CD4-positive, alpha-beta T cell (primary cell): ENCODE measurements at regions of chr19 and their contacts with region 1.

Region 1: DNA sequence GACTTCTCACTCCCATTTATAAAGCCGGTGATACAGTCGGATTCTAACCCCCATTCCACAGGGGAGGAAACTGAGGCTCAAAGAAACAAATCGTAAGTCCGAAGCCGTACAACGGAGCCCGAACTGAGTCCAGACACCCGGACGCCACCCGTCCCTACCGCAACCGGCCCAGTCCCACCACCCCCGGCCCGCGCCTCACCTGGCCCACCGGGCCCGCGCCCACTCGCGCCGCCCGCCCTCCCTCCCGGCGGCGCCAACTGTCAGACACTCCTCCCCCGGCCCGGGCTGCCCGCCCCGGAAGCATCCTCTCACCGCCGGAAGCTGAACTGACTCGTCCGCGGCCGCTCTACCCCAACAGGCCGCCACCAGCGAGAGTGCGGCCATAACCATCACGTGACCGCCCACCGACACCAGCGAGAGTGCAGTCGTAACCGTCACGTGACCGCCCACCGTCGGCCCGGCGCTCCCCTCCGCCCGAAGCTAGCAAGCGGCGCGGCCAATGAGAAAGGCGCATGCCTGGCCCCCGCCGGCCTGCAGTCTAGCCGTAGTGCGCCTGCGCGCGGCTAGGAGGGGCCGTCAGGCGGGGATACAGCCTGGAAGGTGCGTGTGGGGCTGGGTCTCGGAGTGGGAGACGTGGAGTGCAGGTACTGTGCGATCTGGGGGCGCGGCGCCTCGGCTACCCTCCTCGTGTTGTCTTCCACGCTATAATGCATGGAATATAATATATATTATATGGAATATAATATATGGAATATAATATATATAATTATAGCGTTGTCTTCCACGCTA is at the starts of genes C19orf47 and PLD3:
- DNase-seq: peak; percentile 93 to 100 (median 98)
- ATAC-seq: peak; percentile 90
- H3K4me3 ChIP-seq: peak within 1 kb of the TSS; percentile 68
- H3K4me3 Mint-ChIP-seq: peak within 1 kb of the TSS; percentile 96
- H3K27ac ChIP-seq: peak within 1 kb of the TSS; percentile 51 to 67
- H3K27ac Mint-ChIP-seq: peak within 1 kb of the TSS; percentile 89
- H3K4me1 ChIP-seq: peaks cover 25% of the 10 kb centered on the region
- H3K4me1 Mint-ChIP-seq: peaks cover 46% of the 10 kb centered on the region
- H3K27me3 ChIP-seq: no peaks in the 10 kb centered on the region
- H3K27me3 Mint-ChIP-seq: no peaks in the 10 kb centered on the region
- CTCF ChIP-seq: no peak
- total RNA-seq, gene C19orf47: 10.1 to 11.2 TPM
- total RNA-seq, gene PLD3: 56.1 to 58.3 TPM

Region 2: GRCh38 chr19:40190891-40191835 is 157.2 kb before region 1 on chr19 and contains the start of gene MAP3K10:
- CTCF ChIA-PET with region 1: no interaction called
- POLR2A ChIA-PET with region 1: no interaction called
- intact Hi-C with region 1: loop called in 1 of 2 experiments (anchors 2 kb)
- DNase-seq: peak; percentile 37 to 85 (median 68)
- ATAC-seq: peak; percentile 81
- H3K4me3 ChIP-seq: peak within 1 kb of the TSS; percentile 98
- H3K4me3 Mint-ChIP-seq: peak within 1 kb of the TSS; percentile 95
- H3K27ac ChIP-seq: peak within 1 kb of the TSS; percentile 83 to 89
- H3K27ac Mint-ChIP-seq: peak within 1 kb of the TSS; percentile 88
- H3K4me1 ChIP-seq: peaks cover 31% of the 10 kb centered on the region
- H3K4me1 Mint-ChIP-seq: peaks cover 45% of the 10 kb centered on the region
- H3K27me3 ChIP-seq: no peaks in the 10 kb centered on the region
- H3K27me3 Mint-ChIP-seq: no peaks in the 10 kb centered on the region
- CTCF ChIP-seq: no peak
- total RNA-seq, gene MAP3K10: 20.8 to 21.7 TPM

Region 3: DNA sequence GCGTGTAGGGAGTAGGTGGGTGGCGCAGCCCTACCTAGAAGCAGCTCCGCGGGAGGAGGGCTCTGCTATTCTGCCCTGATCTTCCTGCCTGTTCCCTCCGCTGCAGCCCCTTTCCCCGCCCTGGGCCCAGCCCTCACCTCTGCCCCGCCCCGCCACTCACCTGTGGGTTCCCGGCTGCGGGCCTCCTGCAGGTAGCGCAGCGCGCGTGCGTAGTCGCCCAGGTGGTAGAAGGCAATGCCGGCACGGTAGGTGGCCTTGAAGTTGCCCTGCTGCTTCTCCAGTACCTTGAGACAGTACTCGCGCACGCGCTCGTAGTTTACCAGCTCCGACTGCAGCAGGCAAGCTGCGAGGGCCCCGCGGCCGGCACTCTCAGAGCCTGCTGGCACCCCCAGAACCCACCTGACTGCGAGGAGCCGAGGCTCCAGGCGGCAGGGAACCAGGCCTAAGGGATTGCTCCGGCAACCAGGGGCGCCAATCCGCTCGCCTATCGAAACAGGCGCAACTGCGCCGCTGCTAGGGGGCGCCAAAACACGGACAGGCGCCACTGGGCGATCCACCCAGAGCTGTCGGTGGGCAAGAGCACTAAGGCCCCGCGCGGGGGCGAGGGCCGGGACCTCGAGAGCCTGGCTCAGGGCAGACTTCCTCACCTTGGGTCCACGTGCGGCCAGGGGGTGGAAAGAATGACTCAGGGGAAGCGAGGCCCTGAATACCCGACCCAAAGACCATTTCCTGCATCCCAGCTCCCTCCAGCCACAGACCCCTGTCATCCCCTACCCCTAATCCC is 131.1 kb before region 1 on chr19:
- CTCF ChIA-PET with region 1: no interaction called
- POLR2A ChIA-PET with region 1: no interaction called
- intact Hi-C with region 1: no loop called
- DNase-seq: no peak
- ATAC-seq: no peak
- H3K4me3 ChIP-seq: no peak overlapping the region
- H3K4me3 Mint-ChIP-seq: no peak overlapping the region
- H3K27ac ChIP-seq: no peak overlapping the region
- H3K27ac Mint-ChIP-seq: no peak overlapping the region
- H3K4me1 ChIP-seq: peaks cover 14% of the 10 kb centered on the region
- H3K4me1 Mint-ChIP-seq: peaks cover 5% of the 10 kb centered on the region
- H3K27me3 ChIP-seq: peaks cover 33 to 38% of the 10 kb centered on the region in 2 experiments
- H3K27me3 Mint-ChIP-seq: peaks cover 52% of the 10 kb centered on the region
- CTCF ChIP-seq: no peak

Region 4: GRCh38 chr19:40298026-40298425 is 50.3 kb before region 1 on chr19:
- CTCF ChIA-PET with region 1: no interaction called
- POLR2A ChIA-PET with region 1: no interaction called
- intact Hi-C with region 1: no loop called
- DNase-seq: no peak
- ATAC-seq: no peak
- H3K4me3 ChIP-seq: no peak overlapping the region
- H3K4me3 Mint-ChIP-seq: no peak overlapping the region
- H3K27ac ChIP-seq: no peak overlapping the region
- H3K27ac Mint-ChIP-seq: no peak overlapping the region
- H3K4me1 ChIP-seq: no peaks in the 10 kb centered on the region
- H3K4me1 Mint-ChIP-seq: no peaks in the 10 kb centered on the region
- H3K27me3 ChIP-seq: no peaks in the 10 kb centered on the region
- H3K27me3 Mint-ChIP-seq: no peaks in the 10 kb centered on the region
- CTCF ChIP-seq: no peak

Region 5: GRCh38 chr19:40403262-40403984 is 55.1 kb after region 1 on chr19:
- CTCF ChIA-PET with region 1: no interaction called
- POLR2A ChIA-PET with region 1: interaction called, 17 read pairs
- intact Hi-C with region 1: loop called (anchors 1 to 5 kb)
- DNase-seq: peak; percentile 46 to 89 (median 70)
- ATAC-seq: peak; percentile 45
- H3K4me3 ChIP-seq: peak overlapping the region; percentile 88
- H3K4me3 Mint-ChIP-seq: peak overlapping the region; percentile 94
- H3K27ac ChIP-seq: peak overlapping the region; percentile 22 to 56
- H3K27ac Mint-ChIP-seq: peak overlapping the region; percentile 64
- H3K4me1 ChIP-seq: peaks cover 34% of the 10 kb centered on the region
- H3K4me1 Mint-ChIP-seq: peaks cover 35% of the 10 kb centered on the region
- H3K27me3 ChIP-seq: no peaks in the 10 kb centered on the region
- H3K27me3 Mint-ChIP-seq: no peaks in the 10 kb centered on the region
- CTCF ChIP-seq: no peak

Region 6: GRCh38 chr19:40465557-40466150 is 117.3 kb after region 1 on chr19 and contains the start of gene BLVRB:
- CTCF ChIA-PET with region 1: no interaction called
- POLR2A ChIA-PET with region 1: interaction called, 4 read pairs
- intact Hi-C with region 1: loop called in 1 of 2 experiments (anchors 5 kb)
- DNase-seq: peak; percentile 98 to 100 (median 100)
- ATAC-seq: peak; percentile 81
- H3K4me3 ChIP-seq: peak within 1 kb of the TSS; percentile 81
- H3K4me3 Mint-ChIP-seq: peak within 1 kb of the TSS; percentile 93
- H3K27ac ChIP-seq: peak within 1 kb of the TSS; percentile 13 to 62
- H3K27ac Mint-ChIP-seq: peak within 1 kb of the TSS; percentile 87
- H3K4me1 ChIP-seq: peaks cover 35% of the 10 kb centered on the region
- H3K4me1 Mint-ChIP-seq: peaks cover 30% of the 10 kb centered on the region
- H3K27me3 ChIP-seq: peaks cover 0 to 16% of the 10 kb centered on the region in 2 experiments
- H3K27me3 Mint-ChIP-seq: peaks cover 25% of the 10 kb centered on the region
- CTCF ChIP-seq: no peak
- total RNA-seq, gene BLVRB: 4.3 to 5.2 TPM

Region 7: GRCh38 chr19:41439441-41440222 is 1091.3 kb after region 1 on chr19 and contains the start of gene DMAC2:
- CTCF ChIA-PET with region 1: no interaction called
- POLR2A ChIA-PET with region 1: no interaction called
- intact Hi-C with region 1: loop called in 1 of 2 experiments (anchors 10 kb)
- DNase-seq: peak; percentile 86 to 97 (median 93)
- ATAC-seq: peak; percentile 99
- H3K4me3 ChIP-seq: peak within 1 kb of the TSS; percentile 90
- H3K4me3 Mint-ChIP-seq: no peak within 1 kb of the TSS
- H3K27ac ChIP-seq: peak within 1 kb of the TSS; percentile 60 to 77
- H3K27ac Mint-ChIP-seq: no peak within 1 kb of the TSS
- H3K4me1 ChIP-seq: peaks cover 16% of the 10 kb centered on the region
- H3K4me1 Mint-ChIP-seq: no peaks in the 10 kb centered on the region
- H3K27me3 ChIP-seq: no peaks in the 10 kb centered on the region
- H3K27me3 Mint-ChIP-seq: peaks cover 13% of the 10 kb centered on the region
- CTCF ChIP-seq: peak; percentile 65
- total RNA-seq, gene DMAC2: 21.6 to 25.7 TPM